GM12878 (cell line): ENCODE measurements at regions of chr19 and their contacts with region 1.

Region 1: GRCh38 chr19:43555185-43555770 is 20.0 kb downstream of the XRCC1 start:
- DNase-seq: no peak
- ATAC-seq: peak; percentile 94
- H3K4me3 ChIP-seq: no peak overlapping the region
- H3K27ac ChIP-seq: no peak overlapping the region
- H3K4me1 ChIP-seq: no peaks in the 10 kb centered on the region
- H3K27me3 ChIP-seq: no peaks in the 10 kb centered on the region
- CTCF ChIP-seq: peak; percentile 86 to 95 (median 88)
- EP300 ChIP-seq: no peak
- POLR2A ChIP-seq: no peak
- RAD21 ChIP-seq: peak; percentile 75

Region 2: DNA sequence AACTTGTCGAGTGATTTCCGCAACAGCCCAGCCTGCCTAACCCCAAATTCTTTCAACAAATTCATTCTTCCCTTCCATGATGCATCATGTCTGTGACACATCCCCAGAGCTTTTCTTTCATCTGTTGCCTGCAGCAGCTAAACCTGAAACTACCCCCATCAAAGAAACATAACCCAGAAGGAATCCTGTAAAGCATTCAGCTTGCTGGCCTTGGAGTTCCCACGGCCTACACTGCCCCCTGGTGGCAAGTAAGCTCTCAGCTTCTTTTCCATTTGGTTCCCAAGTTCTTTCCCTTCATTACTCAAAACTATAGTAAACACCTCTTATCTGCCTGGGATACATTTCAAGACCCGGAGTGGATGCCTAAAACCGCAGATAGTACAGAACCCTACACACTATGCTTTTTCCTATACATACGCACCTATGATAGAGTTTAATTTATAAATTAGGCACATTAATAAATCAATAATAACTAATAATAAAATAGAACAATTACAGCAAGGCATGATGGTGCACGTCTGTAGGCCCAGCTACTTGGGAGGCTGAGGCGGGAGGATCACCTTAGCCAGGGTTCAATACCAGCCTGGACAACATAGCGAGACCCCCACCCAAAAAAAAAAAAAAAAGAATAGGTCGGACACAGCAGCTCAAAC is 35.7 kb before region 1 on chr19:
- CTCF ChIA-PET with region 1: interaction called, 24 read pairs
- POLR2A ChIA-PET with region 1: no interaction called
- RAD21 ChIA-PET with region 1: interaction called, 3 read pairs
- SMC1A ChIA-PET with region 1: interaction called, 9 read pairs
- in situ Hi-C with region 1: no loop called
- intact Hi-C with region 1: no loop called
- DNase-seq: peak; percentile 33
- ATAC-seq: peak; percentile 77
- H3K4me3 ChIP-seq: no peak overlapping the region
- H3K27ac ChIP-seq: no peak overlapping the region
- H3K4me1 ChIP-seq: peaks cover under 1% of the 10 kb centered on the region; the same call in 1 of the 2 replicates
- H3K27me3 ChIP-seq: no peaks in the 10 kb centered on the region
- CTCF ChIP-seq: peak; percentile 76 to 90 (median 88)
- EP300 ChIP-seq: no peak
- POLR2A ChIP-seq: no peak
- RAD21 ChIP-seq: peak; percentile 95

Region 3: DNA sequence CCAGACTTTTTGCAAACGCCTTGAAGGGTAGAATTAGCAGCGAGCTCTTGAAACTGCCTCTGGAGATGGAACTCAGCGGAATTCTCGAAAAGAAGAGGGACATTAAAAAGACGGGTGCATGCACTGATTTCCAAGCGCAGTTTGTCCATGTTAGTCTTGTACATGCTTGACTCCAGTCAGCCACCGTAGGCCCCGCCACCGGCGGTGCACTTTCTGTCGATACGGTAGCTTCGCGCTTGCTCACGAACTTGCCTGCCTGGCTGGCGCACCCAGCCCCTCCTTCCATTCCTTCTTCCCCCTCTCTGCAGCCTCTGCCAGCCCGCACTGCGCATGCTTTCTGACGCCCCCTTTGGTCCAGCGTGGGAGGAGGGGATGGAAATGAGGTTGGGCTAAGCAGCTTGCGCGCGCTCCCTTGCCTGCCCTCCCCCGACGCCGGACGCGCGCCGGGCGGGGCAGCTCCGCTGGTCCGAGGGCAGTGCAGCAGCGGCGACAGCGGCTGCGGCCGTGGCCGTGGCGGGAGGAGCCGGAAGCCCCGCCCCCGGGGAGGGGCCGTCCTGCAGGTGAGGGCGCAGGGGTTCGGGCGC is 22.2 kb before region 1 on chr19 and contains the start of gene ZNF575:
- CTCF ChIA-PET with region 1: interaction called, 20 read pairs
- POLR2A ChIA-PET with region 1: interaction called, 8 read pairs
- RAD21 ChIA-PET with region 1: interaction called, 4 read pairs
- SMC1A ChIA-PET with region 1: interaction called, 5 read pairs
- in situ Hi-C with region 1: no loop called
- intact Hi-C with region 1: no loop called
- DNase-seq: peak; percentile 91
- ATAC-seq: peak; percentile 88
- H3K4me3 ChIP-seq: peak within 1 kb of the TSS; percentile 74
- H3K27ac ChIP-seq: peak within 1 kb of the TSS; percentile 37
- H3K4me1 ChIP-seq: peaks cover 8% of the 10 kb centered on the region; the same call in 1 of the 2 replicates
- H3K27me3 ChIP-seq: no peaks in the 10 kb centered on the region
- CTCF ChIP-seq: no peak
- EP300 ChIP-seq: no peak
- POLR2A ChIP-seq: peak; percentile 68
- RAD21 ChIP-seq: no peak
- polyA plus RNA-seq, gene ZNF575: 0.23 to 0.35 TPM

Region 4: DNA sequence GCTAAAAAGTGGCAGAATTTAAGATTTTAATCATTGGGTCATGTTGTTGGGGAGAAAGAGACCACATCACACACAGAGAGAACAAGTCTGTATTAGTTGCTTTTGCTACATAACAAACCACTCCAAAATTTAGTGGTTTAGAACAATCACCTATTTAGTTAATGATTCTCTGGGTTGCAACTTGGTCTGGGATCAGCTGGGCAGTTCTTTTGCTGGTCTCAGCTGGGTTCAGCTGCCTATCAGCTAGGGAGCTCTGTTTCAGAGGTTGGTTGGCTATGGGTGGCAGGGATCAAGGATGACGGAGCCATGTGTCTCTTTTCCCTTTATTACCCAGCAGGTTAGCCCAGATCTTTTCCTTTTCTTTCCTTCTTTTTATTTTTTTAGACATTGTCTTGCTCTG is 29.2 kb after region 1 on chr19:
- CTCF ChIA-PET with region 1: interaction called, 13 read pairs
- POLR2A ChIA-PET with region 1: no interaction called
- RAD21 ChIA-PET with region 1: interaction called, 10 read pairs
- SMC1A ChIA-PET with region 1: interaction called, 14 read pairs
- in situ Hi-C with region 1: no loop called
- intact Hi-C with region 1: no loop called
- DNase-seq: no peak
- ATAC-seq: peak; percentile 75
- H3K4me3 ChIP-seq: no peak overlapping the region
- H3K27ac ChIP-seq: no peak overlapping the region
- H3K4me1 ChIP-seq: peaks cover 5% of the 10 kb centered on the region
- H3K27me3 ChIP-seq: no peaks in the 10 kb centered on the region
- CTCF ChIP-seq: no peak
- EP300 ChIP-seq: no peak
- POLR2A ChIP-seq: no peak
- RAD21 ChIP-seq: no peak

Region 5: GRCh38 chr19:43651758-43652545 is 96.7 kb after region 1 on chr19:
- CTCF ChIA-PET with region 1: interaction called, 15 read pairs
- POLR2A ChIA-PET with region 1: no interaction called
- RAD21 ChIA-PET with region 1: interaction called, 5 read pairs
- SMC1A ChIA-PET with region 1: interaction called, 7 read pairs
- in situ Hi-C with region 1: no loop called
- intact Hi-C with region 1: no loop called
- DNase-seq: no peak
- ATAC-seq: peak; percentile 85
- H3K4me3 ChIP-seq: no peak overlapping the region
- H3K27ac ChIP-seq: no peak overlapping the region
- H3K4me1 ChIP-seq: no peaks in the 10 kb centered on the region
- H3K27me3 ChIP-seq: no peaks in the 10 kb centered on the region
- CTCF ChIP-seq: peak; percentile 70 to 75 (median 70)
- EP300 ChIP-seq: no peak
- POLR2A ChIP-seq: no peak
- RAD21 ChIP-seq: peak; percentile 79